Activated CD4-positive, alpha-beta T cell treated with anti-CD3 and anti-CD28 coated beads, Interleukin-2, amount 10 ng/mL, durations not matched to agents 24 days and 14 days (primary cell): ENCODE measurements at regions of chr2 and their contacts with region 1.

Region 1: DNA sequence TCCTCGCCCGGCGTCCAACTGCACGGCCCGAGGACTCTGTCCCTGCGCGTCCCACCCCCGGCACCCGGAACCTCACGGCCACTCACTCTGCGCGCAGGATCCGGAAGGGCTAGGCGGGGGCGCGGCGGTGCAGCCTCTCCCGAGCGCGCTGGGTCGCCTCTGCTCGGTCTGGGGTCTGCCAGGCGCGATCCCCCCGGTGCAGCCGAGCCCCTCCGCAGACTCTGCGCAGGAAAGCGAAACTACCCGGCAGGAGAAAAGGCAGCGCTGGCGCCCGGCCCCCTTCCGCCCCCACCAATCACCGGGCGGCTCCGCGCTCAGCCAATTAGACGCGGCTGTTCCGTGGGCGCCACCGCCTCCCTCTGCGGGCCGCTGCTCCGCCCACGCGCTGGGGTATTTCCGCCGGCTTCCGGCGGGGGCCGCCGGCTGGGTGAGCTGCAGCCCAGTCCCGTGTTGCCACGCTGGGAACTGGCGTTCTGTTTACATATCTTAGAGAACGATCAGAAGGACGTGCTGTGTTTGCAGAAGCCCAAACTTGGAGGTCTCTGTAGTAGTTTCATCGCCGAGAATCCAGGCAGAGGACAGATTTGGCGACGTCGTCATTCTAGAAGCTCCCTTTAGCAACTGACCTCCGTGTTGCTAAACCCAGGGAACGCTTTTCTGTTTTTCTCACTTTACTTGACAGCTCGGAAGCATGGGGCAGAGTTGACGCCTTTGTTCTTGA is at the start of gene STAT1:
- DNase-seq: peak; percentile 100
- H3K4me3 Mint-ChIP-seq: no peak within 1 kb of the TSS
- H3K27ac Mint-ChIP-seq: no peak within 1 kb of the TSS
- H3K4me1 Mint-ChIP-seq: peaks cover 37% of the 10 kb centered on the region
- H3K27me3 Mint-ChIP-seq: no peaks in the 10 kb centered on the region
- total RNA-seq, gene STAT1: 152 and 160 TPM in 2 replicates

Region 2: DNA sequence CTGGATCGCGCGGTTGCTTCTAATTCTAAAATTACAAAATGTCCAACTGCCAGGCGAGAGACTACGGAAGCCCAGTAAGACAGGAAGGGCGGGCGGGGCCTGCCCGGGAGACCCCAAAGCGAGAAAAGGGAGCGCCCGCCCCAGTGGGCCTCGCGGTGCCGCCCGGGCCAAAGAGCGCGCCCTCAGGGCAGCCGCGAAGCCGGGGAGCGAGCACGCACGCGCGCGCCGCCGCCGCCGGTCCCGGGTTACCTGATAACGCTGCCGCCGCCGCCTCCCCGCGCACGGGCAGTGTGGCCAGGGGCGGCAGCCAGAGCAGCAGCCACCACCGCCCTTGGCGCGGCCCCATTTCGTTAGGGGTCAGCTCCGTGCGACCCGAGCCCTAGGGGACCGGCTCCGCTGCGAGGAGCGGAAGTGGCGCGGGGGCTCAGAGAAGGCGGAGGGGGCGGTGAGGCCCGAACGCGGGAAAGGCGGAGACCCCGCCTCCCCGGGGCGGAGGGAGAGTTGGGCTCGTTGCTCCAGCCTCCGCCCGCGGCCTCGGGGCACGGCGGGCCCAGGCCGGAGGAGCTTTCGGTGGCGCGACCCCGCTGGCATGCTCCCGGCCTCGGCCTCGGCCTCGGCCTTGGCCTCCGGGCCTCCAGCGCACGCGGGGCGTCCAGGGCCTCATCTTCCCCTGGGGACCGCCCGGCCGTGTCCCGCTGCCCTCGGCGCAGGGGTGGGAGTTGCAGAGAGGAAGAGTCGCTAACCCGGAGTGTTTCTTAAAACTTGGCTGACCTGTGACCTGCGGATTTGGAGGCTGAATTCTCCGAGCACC is 479.6 kb before region 1 on chr2 and contains the start of gene NEMP2:
- intact Hi-C with region 1: loop called (anchors 10 kb)
- DNase-seq: peak; percentile 95
- H3K4me3 Mint-ChIP-seq: peak within 1 kb of the TSS; percentile 93
- H3K27ac Mint-ChIP-seq: peak within 1 kb of the TSS; percentile 99
- H3K4me1 Mint-ChIP-seq: peaks cover 41% of the 10 kb centered on the region
- H3K27me3 Mint-ChIP-seq: no peaks in the 10 kb centered on the region
- total RNA-seq, gene NEMP2: 16.4 and 19.0 TPM in 2 replicates

Region 3: GRCh38 chr2:190911813-190912212 is 102.3 kb before region 1 on chr2:
- intact Hi-C with region 1: loop called (anchors 5 kb)
- DNase-seq: no peak
- H3K4me3 Mint-ChIP-seq: peak overlapping the region; percentile 9
- H3K27ac Mint-ChIP-seq: peak overlapping the region; percentile 74
- H3K4me1 Mint-ChIP-seq: peaks cover 25% of the 10 kb centered on the region
- H3K27me3 Mint-ChIP-seq: no peaks in the 10 kb centered on the region

Region 4: DNA sequence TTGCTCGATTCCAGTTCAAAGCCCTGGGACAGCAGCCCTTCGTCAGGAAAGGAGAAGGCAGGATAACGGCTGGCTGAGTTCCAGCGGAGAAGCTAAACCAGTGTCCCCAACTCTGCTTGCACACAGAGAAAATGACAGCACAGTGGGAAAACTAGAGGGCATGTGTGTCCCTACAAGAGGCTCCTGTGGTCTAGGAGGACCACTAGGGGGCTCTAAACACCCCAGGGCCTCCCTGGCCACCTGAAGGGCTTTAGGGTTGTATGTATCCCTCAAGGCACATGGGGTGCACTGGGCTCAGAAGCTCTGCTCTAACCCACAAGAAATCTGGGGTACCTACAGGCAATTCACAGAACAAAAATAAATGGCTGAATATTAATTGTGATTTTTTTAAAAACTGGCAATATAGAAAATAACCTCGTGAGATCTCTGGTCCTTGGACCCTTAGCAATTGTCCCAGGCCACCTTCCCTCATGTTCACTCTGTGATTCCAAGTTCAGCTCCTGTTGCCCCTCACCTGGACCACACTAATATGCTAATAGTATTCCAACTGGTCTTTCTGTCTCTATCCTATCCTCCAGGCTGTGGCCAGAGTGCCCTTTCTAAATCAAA is 17.6 kb before region 1 on chr2:
- intact Hi-C with region 1: loop called (anchors 2 kb)
- DNase-seq: peak; percentile 73
- H3K4me3 Mint-ChIP-seq: peak overlapping the region; percentile 45
- H3K27ac Mint-ChIP-seq: peak overlapping the region; percentile 77
- H3K4me1 Mint-ChIP-seq: peaks cover 78% of the 10 kb centered on the region
- H3K27me3 Mint-ChIP-seq: no peaks in the 10 kb centered on the region

Region 5: GRCh38 chr2:191003405-191004309 is 10.4 kb before region 1 on chr2:
- intact Hi-C with region 1: loop called (anchors 1 kb)
- DNase-seq: no peak
- H3K4me3 Mint-ChIP-seq: peak overlapping the region; percentile 1
- H3K27ac Mint-ChIP-seq: peak overlapping the region; percentile 75
- H3K4me1 Mint-ChIP-seq: peaks cover 75% of the 10 kb centered on the region
- H3K27me3 Mint-ChIP-seq: no peaks in the 10 kb centered on the region

Region 6: GRCh38 chr2:191030521-191031154 is 16.5 kb after region 1 on chr2:
- intact Hi-C with region 1: loop called (anchors 1 kb)
- DNase-seq: peak; percentile 86
- H3K4me3 Mint-ChIP-seq: peak overlapping the region; percentile 21
- H3K27ac Mint-ChIP-seq: peak overlapping the region; percentile 18
- H3K4me1 Mint-ChIP-seq: peaks cover 44% of the 10 kb centered on the region
- H3K27me3 Mint-ChIP-seq: no peaks in the 10 kb centered on the region

Region 7: GRCh38 chr2:191081411-191082155 is 67.5 kb after region 1 on chr2:
- intact Hi-C with region 1: no loop called
- DNase-seq: no peak
- H3K4me3 Mint-ChIP-seq: no peak overlapping the region
- H3K27ac Mint-ChIP-seq: no peak overlapping the region
- H3K4me1 Mint-ChIP-seq: peaks cover 21% of the 10 kb centered on the region
- H3K27me3 Mint-ChIP-seq: no peaks in the 10 kb centered on the region